Activated T-helper 1 cell treated with anti-CD3 and anti-CD28 coated beads, Interleukin-12 subunit alpha, Interleukin-12 subunit beta, Interleukin-2, Interleukin-4 antibody, amounts not matched to agents 30 ng/mL and 10 ng/mL and 1 ng/mL, durations not matched to agents 14 hours and 24 hours and 36 hours (primary cell): ENCODE measurements at regions of chr5 and their contacts with region 1.

Region 1: DNA sequence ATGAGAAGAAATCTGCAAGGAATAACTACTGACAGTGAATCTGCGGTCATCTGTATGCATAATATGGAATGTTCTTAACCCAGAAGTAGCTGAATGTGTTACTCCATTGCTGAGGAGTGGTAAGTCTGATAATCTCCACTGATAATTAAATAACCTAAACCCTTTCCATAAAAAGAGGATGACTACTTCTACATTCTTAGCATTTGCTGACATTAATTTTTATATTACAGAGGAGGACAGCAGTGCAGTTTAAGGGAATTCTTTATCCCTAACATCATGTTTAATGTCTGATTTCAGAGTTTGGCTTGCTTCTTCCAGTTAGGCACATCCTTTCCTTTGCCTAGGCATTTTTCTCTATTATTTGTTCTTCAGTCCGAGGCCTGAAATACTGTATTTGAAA is 52.2 kb downstream of the CDC42SE2 start:
- DNase-seq: no peak
- H3K4me3 Mint-ChIP-seq: no peak overlapping the region
- H3K27ac Mint-ChIP-seq: no peak overlapping the region
- H3K4me1 Mint-ChIP-seq: peaks cover 74% of the 10 kb centered on the region
- H3K27me3 Mint-ChIP-seq: no peaks in the 10 kb centered on the region

Region 2: GRCh38 chr5:131109540-131110255 is 206.3 kb before region 1 on chr5:
- intact Hi-C with region 1: no loop called
- DNase-seq: peak; percentile 11
- H3K4me3 Mint-ChIP-seq: no peak overlapping the region
- H3K27ac Mint-ChIP-seq: no peak overlapping the region
- H3K4me1 Mint-ChIP-seq: peaks cover 17% of the 10 kb centered on the region
- H3K27me3 Mint-ChIP-seq: no peaks in the 10 kb centered on the region

Region 3: DNA sequence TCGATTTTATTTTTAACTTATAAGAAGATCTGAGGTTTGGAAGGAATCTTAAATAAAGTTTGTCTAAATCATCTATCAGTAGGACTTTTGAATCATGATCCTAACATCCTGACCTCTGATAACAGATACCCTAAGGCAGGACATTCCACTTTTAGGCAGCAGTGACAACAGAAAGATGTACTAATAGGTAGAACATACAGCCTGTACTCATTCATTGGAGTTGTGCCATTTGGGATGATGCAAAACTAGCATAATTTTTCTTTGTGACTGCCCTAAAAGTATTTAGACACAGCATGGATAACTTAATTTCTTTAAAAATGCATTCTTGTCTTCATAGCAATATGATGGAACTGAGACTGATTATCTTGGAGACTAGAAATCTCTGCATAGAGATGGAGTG is 12.5 kb before region 1 on chr5:
- intact Hi-C with region 1: loop called (anchors 2 kb)
- DNase-seq: no peak
- H3K4me3 Mint-ChIP-seq: no peak overlapping the region
- H3K27ac Mint-ChIP-seq: peak overlapping the region; percentile 21
- H3K4me1 Mint-ChIP-seq: peaks cover 66% of the 10 kb centered on the region
- H3K27me3 Mint-ChIP-seq: no peaks in the 10 kb centered on the region

Region 4: DNA sequence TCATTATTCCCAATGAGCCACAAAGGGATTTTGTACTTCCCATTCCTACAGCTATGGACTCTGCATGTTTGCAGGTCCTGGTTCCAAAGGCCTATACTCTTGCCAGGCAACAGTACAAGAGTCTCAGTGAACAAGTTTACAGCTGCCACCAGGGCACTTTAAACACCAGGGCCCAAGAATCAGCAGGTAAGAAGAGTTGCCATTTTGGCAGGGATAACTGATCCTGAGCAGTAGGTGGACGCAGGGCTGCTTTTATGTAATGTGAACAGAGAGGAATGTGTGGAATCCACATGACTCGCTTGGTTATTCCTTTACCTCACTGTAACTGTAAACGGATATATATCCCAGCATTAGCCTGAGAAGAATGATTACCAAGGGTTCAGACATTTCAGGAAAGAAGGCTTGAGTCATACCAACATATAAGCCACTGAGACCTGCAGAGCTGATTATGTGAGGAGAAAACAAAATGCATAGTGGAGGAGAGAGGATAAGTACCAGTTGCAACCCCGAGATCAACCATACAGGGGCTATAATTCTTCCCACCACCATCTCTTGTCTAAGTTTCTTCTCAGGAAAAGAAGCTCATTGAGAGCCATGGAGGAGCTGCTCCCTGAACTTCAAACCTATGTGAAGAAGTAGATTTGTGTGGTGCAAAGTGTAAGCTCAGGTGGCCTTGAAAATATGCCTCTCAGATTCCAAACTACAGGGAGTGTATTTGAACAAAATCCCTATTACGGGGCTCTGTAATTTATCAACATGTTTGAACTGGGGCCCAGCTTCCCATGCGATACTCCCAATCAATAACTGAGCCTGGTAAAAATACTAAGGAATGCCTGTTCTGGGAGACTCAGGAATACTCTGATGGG is 294.4 kb after region 1 on chr5:
- intact Hi-C with region 1: no loop called
- DNase-seq: no peak
- H3K4me3 Mint-ChIP-seq: no peak overlapping the region
- H3K27ac Mint-ChIP-seq: no peak overlapping the region
- H3K4me1 Mint-ChIP-seq: peaks cover 16% of the 10 kb centered on the region
- H3K27me3 Mint-ChIP-seq: no peaks in the 10 kb centered on the region